Esophagus muscularis mucosa (tissue), 4 donors: ENCODE measurements at regions of chr2 and their contacts with region 1.

Region 1: GRCh38 chr2:175690113-175690837 is 311.8 kb downstream of the LNPK start:
- DNase-seq: no peak
- H3K4me3 ChIP-seq: no peak overlapping the region
- H3K27ac ChIP-seq: no peak overlapping the region
- H3K4me1 ChIP-seq: no peaks in the 10 kb centered on the region
- H3K27me3 ChIP-seq: peaks cover 0 to 45% (median 4%) of the 10 kb centered on the region in 4 donors
- CTCF ChIP-seq: peak; percentile 62 to 74 (median 63)
- EP300 ChIP-seq: no peak
- POLR2A ChIP-seq: no peak

Region 2: DNA sequence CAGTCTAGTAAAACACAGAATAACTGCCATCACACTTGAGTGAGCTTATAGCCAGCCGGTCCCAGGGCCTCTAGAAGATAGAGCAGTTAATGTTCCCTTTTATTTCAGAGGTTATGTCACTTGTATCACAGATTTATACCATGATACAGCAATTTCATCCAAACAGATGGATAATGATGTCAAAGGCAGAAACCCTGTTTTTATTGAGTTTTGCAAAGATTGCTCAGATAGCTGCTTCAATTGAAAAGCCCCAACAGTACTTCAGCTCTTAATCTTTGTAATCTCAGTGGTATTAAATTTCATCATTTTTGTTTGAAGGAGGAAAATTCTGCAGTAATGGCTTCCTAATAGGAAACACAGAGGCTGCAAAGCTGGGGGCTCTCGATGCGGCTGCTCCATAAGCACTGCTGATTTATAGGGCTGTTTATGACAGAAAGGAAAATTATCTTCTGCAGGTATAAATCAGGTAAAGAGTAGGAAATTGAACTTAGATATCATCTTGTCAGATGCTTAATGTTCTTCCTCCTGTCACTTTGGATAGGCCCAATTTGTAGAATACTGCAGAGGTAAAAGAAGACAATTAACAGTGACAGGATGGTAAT is 199.5 kb after region 1 on chr2:
- intact Hi-C with region 1: loop called (anchors 10 kb)
- DNase-seq: no peak
- H3K4me3 ChIP-seq: no peak overlapping the region
- H3K27ac ChIP-seq: no peak overlapping the region
- H3K4me1 ChIP-seq: no peaks in the 10 kb centered on the region
- H3K27me3 ChIP-seq: no peaks in the 10 kb centered on the region
- CTCF ChIP-seq: no peak
- EP300 ChIP-seq: no peak
- POLR2A ChIP-seq: no peak

Region 3: GRCh38 chr2:176096986-176097819 is 406.9 kb after region 1 on chr2:
- intact Hi-C with region 1: loop called (anchors 2 kb)
- DNase-seq: no peak
- H3K4me3 ChIP-seq: peak overlapping the region; percentile 36 to 57 (median 46)
- H3K27ac ChIP-seq: no peak overlapping the region
- H3K4me1 ChIP-seq: peaks cover 16 to 60% (median 54%) of the 10 kb centered on the region in 4 donors
- H3K27me3 ChIP-seq: peaks cover 3 to 100% (median 98%) of the 10 kb centered on the region in 4 donors
- CTCF ChIP-seq: peak; percentile 63 to 89 (median 67)
- EP300 ChIP-seq: no peak
- POLR2A ChIP-seq: no peak